ENCODE measurements at regions of chr9 and their contacts with region 1.

Region 1: DNA sequence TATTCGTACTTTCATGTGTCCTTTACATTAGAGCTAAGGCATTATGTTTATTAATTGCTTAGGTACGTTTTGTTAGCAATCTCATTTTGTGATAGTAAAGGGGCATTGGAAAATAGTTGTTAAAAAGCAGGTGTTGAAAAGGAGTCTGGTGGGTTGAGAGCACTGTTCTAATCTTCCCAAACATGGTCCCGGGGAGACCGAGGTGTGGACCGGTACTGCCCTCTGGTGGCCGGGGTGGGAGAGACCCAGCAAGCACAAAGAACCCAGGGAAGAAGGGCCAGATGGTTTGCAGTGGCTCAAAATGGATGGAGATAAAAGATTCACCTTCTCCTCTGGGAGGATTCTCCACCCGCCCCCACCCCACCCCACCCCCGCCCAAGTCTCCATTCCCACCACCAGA is 26.1 kb downstream of the IDNK start:
- DNase-seq: peak; percentile 60 to 83 (median 61)
- ATAC-seq: peak; percentile 58 to 81 (median 76)
- H3K4me3 ChIP-seq: no peak overlapping the region
- H3K27ac ChIP-seq: peak overlapping the region in 2 of 12 donors; percentile 15 to 34
- H3K4me1 ChIP-seq: peaks cover 0 to 15% (median 1%) of the 10 kb centered on the region in 12 donors
- H3K27me3 ChIP-seq: no peaks in the 10 kb centered on the region
- CTCF ChIP-seq: peak; percentile 60 to 77 (median 71)
- POLR2A ChIP-seq: no peak

Region 2: GRCh38 chr9:83583151-83584014 is 65.7 kb before region 1 on chr9:
- intact Hi-C with region 1: loop called in 1 of 10 experiments (anchors 10 kb)
- DNase-seq: peak in 4 of 5 donors; percentile 45 to 53 (median 46)
- ATAC-seq: peak in 3 of 4 donors; percentile 65 to 86 (median 66)
- H3K4me3 ChIP-seq: no peak overlapping the region
- H3K27ac ChIP-seq: no peak overlapping the region
- H3K4me1 ChIP-seq: no peaks in the 10 kb centered on the region
- H3K27me3 ChIP-seq: no peaks in the 10 kb centered on the region
- CTCF ChIP-seq: peak; percentile 59 to 82 (median 69)
- POLR2A ChIP-seq: no peak

Region 3: GRCh38 chr9:83920927-83921707 is 272.0 kb after region 1 on chr9 and contains the start of gene KIF27:
- intact Hi-C with region 1: loop called in 1 of 10 experiments (anchors 10 kb)
- DNase-seq: peak; percentile 99 to 100 (median 99)
- ATAC-seq: peak; percentile 98 to 99 (median 99)
- H3K4me3 ChIP-seq: peak within 1 kb of the TSS; percentile 65 to 96 (median 76)
- H3K27ac ChIP-seq: peak within 1 kb of the TSS; percentile 66 to 98 (median 92)
- H3K4me1 ChIP-seq: peaks cover 0 to 12% (median 5%) of the 10 kb centered on the region in 12 donors
- H3K27me3 ChIP-seq: no peaks in the 10 kb centered on the region
- CTCF ChIP-seq: peak in 11 of 12 donors; percentile 21 to 56 (median 37)
- POLR2A ChIP-seq: peak; percentile 26 to 89
- total RNA-seq, gene KIF27: 2.5 to 4.2 (median 3.2) TPM

Measured in heart left ventricle (tissue), 16 donors.